Left cardiac atrium (tissue), 4 donors: ENCODE measurements at regions of chr12 and their contacts with region 1.

Region 1: DNA sequence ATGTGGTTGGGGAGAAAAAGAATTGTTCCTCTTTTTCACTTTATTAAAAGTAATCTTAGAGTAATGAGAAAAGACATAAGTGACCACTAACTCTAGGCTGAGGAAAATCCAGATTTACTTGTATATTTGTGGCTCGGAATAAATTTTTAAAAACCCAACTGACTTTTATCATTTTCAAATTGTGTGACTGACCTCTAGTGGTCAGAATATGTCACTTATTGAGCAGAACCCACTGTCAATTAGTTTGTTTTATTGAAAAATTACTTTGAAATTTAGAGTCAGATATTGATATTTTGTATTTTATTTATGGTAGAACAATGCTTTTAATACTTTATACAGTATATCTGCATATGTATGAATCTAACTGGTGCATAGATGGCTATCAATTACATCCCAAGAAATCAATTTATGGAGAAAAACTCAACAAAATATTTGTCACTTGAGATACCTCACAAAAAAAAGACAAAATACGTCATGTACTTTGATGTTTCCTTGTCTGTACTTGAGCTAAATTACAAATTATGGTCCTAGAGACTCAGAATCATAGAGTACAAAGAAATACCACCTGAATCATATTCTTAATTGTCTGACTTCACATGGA is 229.4 kb downstream of the CNTN1 start:
- DNase-seq: no peak
- ATAC-seq: no peak

Region 2: GRCh38 chr12:40152783-40153383 is 768.8 kb before region 1 on chr12:
- intact Hi-C with region 1: loop called in 1 of 2 experiments (anchors 10 kb)
- DNase-seq: peak; percentile 43
- ATAC-seq: peak in 1 of 2 donors; percentile 30

Region 3: DNA sequence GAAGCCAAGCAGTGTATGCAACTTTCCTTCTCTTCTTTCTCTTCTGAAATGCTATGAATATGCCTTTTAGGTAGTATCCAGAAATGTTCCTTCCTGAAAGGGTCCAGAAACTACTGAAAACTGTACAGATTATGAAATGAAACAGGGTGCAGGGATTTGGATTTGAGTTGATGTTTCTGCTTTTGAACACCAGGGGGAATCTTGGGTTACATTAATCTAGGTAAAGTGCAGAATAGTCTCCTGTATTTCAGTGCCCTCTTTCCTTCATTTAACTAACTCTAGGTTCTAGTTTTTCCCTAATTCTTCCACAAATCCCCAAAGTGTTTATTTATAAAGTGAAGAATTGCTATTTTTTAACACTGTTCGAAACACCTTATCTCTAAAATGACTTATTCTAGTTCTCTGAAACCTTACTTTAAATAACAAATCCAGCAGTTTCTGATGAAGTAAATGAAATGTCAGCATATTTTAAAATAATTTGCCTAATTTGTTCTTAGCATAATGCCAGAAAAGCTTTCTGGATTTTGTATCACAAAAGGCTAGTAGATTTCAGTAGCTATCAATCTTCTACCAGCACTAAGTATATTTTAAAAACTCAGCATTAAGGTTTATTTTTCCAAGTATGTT is 585.0 kb before region 1 on chr12:
- intact Hi-C with region 1: loop called in 1 of 2 experiments (anchors 5 kb)
- DNase-seq: no peak
- ATAC-seq: peak in 1 of 2 donors; percentile 29

Region 4: DNA sequence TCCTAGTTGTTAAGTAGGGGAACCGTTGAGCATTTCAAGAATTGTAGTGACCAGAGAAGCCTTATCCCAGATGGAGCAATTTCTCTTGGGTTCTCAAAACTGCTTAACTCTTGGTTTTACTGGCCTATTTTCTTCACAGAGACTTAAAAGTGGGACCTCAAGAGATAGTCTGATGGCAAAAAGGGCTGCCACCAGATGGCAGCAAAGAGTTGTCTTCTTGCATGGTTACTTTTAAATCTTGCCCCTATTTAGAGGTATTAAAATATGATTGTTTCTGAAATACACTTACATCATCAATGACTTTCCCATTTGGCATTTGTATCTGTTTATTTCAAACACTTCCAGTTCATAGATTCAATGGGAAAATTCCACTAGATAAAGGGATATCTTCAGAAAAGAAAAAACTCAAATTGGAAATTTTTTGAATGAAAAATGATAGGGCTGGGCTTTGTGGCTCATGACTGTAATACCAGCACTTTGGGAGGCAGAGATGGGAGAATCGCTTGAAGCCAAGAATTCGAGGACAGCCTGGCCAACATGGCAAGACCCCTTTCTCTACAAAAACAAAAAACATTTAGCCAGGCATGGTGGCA is 299.3 kb before region 1 on chr12:
- intact Hi-C with region 1: loop called (anchors 5 to 10 kb)
- DNase-seq: peak; percentile 49
- ATAC-seq: no peak

Region 5: DNA sequence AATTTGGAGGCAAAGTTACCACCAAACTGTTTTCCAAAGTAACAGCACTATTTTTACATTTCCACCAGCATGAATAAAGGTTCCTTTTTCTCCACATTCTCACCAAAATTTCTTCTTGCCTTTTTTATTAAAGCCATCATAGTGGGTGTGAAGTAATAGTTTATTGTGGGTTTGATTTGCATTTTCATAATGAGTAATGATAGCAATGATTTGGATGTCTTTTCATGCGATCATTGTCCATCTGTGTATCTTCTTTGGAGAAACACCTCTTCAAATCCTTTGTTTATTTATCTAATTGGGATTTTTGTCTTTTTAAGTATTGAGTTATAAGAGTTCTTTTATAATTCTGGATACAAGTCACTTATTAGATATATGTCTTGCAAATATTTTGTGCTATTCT is 56.8 kb before region 1 on chr12:
- intact Hi-C with region 1: no loop called
- DNase-seq: no peak
- ATAC-seq: no peak

Region 6: DNA sequence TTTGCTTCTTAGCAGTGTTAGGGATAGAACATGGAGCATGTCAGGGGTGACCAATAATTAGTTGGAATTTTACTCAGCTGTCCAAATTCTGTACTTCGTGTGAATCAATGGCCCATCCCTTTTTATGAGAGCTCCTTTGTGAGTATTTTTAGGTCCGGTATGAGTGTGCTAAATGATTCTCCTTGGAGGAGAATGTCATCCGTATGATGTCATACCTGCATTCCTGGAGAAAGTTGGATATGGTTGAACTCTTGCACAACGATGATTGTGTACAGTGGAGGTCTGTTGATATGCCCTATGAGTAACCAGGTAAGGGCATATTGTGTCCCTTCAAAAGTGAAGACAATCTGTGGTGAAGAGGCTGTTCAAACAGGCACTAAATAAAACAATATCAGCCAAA is 822.2 kb after region 1 on chr12:
- intact Hi-C with region 1: no loop called
- DNase-seq: no peak
- ATAC-seq: no peak